A673 (cell line): ENCODE measurements at regions of chr2 and their contacts with region 1.

Region 1: GRCh38 chr2:163191372-163191771 is 352.8 kb upstream of the KCNH7 start:
- DNase-seq: peak; percentile 42
- H3K4me3 ChIP-seq: no peak overlapping the region
- H3K27ac ChIP-seq: no peak overlapping the region
- H3K4me1 ChIP-seq: no peaks in the 10 kb centered on the region
- H3K27me3 ChIP-seq: no peaks in the 10 kb centered on the region
- CTCF ChIP-seq: peak; percentile 75

Region 2: DNA sequence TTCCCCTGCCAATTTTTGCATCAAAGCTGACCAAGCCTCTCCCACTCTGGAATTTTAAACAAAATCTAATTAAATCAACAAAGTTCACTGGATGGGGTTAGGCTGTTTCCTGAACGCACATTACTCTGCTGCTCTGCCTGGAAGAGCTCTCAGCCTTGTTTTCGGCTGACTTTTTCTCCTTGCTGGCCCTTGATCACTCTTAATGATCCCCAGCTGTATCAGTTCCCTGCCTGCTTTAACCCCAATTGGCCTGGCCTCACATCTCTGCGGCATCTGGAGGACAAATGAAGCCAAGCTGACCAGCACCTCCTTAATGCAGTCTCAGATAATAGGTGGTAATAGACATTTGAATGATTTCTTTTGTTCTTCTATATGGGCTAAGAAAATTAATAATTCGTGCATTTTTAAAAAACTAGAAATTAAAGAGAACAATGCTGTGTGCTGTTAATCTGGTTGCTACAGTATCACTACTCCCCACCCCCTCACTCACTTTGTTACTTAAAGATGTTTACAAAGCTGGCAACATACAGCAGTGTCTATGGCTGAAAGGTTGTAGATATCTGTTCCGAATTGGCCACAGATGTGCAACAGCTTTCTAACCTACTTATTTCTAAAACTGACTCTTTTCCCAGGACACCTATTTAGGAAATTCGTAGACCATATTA is 62.4 kb after region 1 on chr2:
- CTCF ChIA-PET with region 1: no interaction called
- POLR2A ChIA-PET with region 1: no interaction called
- intact Hi-C with region 1: no loop called
- DNase-seq: no peak
- H3K4me3 ChIP-seq: no peak overlapping the region
- H3K27ac ChIP-seq: no peak overlapping the region
- H3K4me1 ChIP-seq: no peaks in the 10 kb centered on the region
- H3K27me3 ChIP-seq: peaks cover 22% of the 10 kb centered on the region
- CTCF ChIP-seq: no peak

Region 3: GRCh38 chr2:164061129-164061746 is 869.9 kb after region 1 on chr2:
- CTCF ChIA-PET with region 1: no interaction called
- POLR2A ChIA-PET with region 1: no interaction called
- intact Hi-C with region 1: loop called (anchors 2 kb)
- DNase-seq: peak; percentile 50
- H3K4me3 ChIP-seq: no peak overlapping the region
- H3K27ac ChIP-seq: no peak overlapping the region
- H3K4me1 ChIP-seq: no peaks in the 10 kb centered on the region
- H3K27me3 ChIP-seq: peaks cover 22% of the 10 kb centered on the region
- CTCF ChIP-seq: peak; percentile 77

Region 4: DNA sequence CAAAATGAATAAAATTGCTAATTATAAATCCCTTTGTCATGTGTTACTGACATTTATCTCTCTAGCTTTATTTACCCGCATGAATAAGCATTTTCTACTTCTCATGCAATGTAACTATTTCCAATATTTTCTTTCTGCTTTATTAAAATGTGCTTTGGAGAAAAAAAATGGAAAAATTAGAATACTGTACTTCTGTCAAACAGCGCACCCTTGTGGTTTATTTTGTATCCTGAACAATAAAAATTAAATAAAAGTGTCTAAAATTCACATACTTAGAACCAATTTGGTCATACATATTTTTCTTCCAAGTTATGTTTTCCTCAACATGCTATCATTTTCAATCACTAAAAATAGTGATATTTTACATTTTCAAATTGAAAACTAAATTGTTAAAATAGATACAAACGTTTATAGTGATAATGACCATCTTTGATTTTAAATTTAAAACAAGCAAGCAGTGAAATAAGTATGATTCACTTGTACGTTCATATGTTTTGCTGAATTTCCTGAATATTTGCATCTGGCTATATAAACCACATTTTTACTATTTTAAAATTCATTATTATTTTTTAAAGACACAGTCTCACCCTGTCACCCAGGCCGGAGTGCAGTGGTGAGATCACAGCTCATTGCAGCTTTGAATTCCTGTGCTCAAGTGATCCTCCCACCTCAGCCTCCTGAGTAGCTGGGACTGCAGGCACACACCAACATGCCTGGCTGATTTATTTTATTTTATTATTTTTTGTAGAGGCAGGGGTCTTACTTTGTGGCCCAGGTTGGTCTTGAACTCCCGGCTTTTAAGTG is 1525.8 kb after region 1 on chr2:
- CTCF ChIA-PET with region 1: no interaction called
- POLR2A ChIA-PET with region 1: interaction called, 10 read pairs
- intact Hi-C with region 1: no loop called
- DNase-seq: peak; percentile 64
- H3K4me3 ChIP-seq: no peak overlapping the region
- H3K27ac ChIP-seq: no peak overlapping the region
- H3K4me1 ChIP-seq: peaks cover 6% of the 10 kb centered on the region
- H3K27me3 ChIP-seq: no peaks in the 10 kb centered on the region
- CTCF ChIP-seq: peak; percentile 77